ENCODE measurements at regions of chr6 and their contacts with region 1.

Region 1: GRCh38 chr6:160930547-160931377 is 60.8 kb upstream of the MAP3K4 start:
- DNase-seq: peak; percentile 61
- H3K4me3 ChIP-seq: peak overlapping the region; percentile 53 to 66 (median 54)
- H3K27ac ChIP-seq: no peak overlapping the region
- H3K4me1 ChIP-seq: peaks cover 4% of the 10 kb centered on the region
- H3K27me3 ChIP-seq: no peaks in the 10 kb centered on the region
- CTCF ChIP-seq: peak; percentile 76 to 92

Region 2: DNA sequence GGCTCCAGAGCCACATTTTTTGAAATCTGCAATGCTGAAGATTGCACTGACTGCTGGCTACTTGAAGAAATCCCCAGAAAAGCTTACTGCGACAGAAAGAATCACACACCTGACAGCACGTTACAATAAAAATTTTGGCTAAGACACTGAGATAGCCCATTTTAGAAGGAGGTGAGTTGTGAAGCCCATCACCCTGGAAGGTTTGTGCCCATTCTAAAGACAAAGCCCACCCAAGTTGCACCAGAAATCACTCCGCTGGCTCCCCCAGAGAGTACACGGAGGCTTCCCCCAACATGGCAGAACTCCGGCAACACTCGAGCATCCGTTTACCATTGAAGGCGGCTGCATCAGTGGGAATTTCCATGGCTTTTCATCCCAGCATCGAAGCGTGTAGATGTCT is 296.1 kb before region 1 on chr6:
- CTCF ChIA-PET with region 1: no interaction called
- dilution Hi-C with region 1: no loop called
- in situ Hi-C with region 1: no loop called
- intact Hi-C with region 1: no loop called
- DNase-seq: peak; percentile 0
- H3K4me3 ChIP-seq: no peak overlapping the region
- H3K27ac ChIP-seq: no peak overlapping the region
- H3K4me1 ChIP-seq: no peaks in the 10 kb centered on the region
- H3K27me3 ChIP-seq: no peaks in the 10 kb centered on the region
- CTCF ChIP-seq: no peak

Region 3: GRCh38 chr6:160733050-160733646 is 197.6 kb before region 1 on chr6:
- CTCF ChIA-PET with region 1: no interaction called
- dilution Hi-C with region 1: no loop called
- in situ Hi-C with region 1: no loop called
- intact Hi-C with region 1: loop called (anchors 1 kb)
- DNase-seq: peak; percentile 35
- H3K4me3 ChIP-seq: no peak overlapping the region
- H3K27ac ChIP-seq: no peak overlapping the region
- H3K4me1 ChIP-seq: no peaks in the 10 kb centered on the region
- H3K27me3 ChIP-seq: no peaks in the 10 kb centered on the region
- CTCF ChIP-seq: peak; percentile 83 to 90

Region 4: DNA sequence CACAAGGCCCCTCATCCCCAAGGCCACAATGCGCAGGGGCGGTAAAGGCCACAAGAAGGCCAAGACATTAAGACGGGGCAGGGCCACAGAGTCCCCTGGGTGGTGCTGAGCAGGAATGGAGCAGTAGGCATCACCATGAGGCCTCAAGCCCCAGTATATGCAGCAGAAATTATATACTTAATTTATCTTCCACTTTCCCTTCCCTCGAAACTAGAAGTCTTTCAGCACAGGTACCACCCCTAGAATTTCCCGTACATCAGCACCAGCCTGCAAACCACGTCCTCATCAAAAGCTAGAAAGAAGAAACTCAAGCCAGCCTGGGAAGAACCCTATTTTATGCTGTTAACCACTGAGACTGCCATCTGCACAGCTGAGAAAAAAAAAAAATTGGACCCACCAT is 139.3 kb before region 1 on chr6:
- CTCF ChIA-PET with region 1: no interaction called
- dilution Hi-C with region 1: no loop called
- in situ Hi-C with region 1: no loop called
- intact Hi-C with region 1: no loop called
- DNase-seq: peak; percentile 45
- H3K4me3 ChIP-seq: no peak overlapping the region
- H3K27ac ChIP-seq: peak overlapping the region; percentile 34
- H3K4me1 ChIP-seq: peaks cover 25% of the 10 kb centered on the region
- H3K27me3 ChIP-seq: no peaks in the 10 kb centered on the region
- CTCF ChIP-seq: no peak

Region 5: DNA sequence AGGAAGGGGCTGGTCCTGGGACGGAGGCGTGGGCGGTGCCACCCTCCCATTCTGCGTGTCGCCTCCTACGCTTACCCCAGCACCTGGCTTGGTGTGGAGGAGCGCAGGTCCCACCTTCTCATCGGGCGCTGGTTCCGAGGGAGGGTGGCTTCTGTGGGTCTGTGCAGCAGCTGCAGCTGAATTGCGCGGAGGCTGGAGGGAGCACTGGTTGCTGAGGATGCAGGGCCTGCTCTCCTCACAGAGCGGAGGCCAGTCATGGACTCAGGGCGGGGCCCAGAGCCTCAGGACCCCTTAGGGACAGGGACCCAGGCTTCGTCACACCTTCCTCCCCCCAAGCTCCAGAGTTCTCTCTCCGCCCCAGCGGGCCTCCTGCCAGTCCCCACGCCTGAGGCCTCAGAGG is 67.0 kb before region 1 on chr6:
- CTCF ChIA-PET with region 1: no interaction called
- dilution Hi-C with region 1: no loop called
- in situ Hi-C with region 1: no loop called
- intact Hi-C with region 1: no loop called
- DNase-seq: no peak
- H3K4me3 ChIP-seq: no peak overlapping the region
- H3K27ac ChIP-seq: no peak overlapping the region
- H3K4me1 ChIP-seq: no peaks in the 10 kb centered on the region
- H3K27me3 ChIP-seq: no peaks in the 10 kb centered on the region
- CTCF ChIP-seq: no peak

Region 6: GRCh38 chr6:160992061-160992979 is 61.6 kb after region 1 on chr6:
- CTCF ChIA-PET with region 1: no interaction called
- dilution Hi-C with region 1: no loop called
- in situ Hi-C with region 1: loop called in 1 of 2 experiments (anchors 10 kb)
- intact Hi-C with region 1: loop called (anchors 1 kb)
- DNase-seq: peak; percentile 65
- H3K4me3 ChIP-seq: peak overlapping the region; percentile 89 to 93 (median 93)
- H3K27ac ChIP-seq: peak overlapping the region; percentile 78
- H3K4me1 ChIP-seq: peaks cover 20% of the 10 kb centered on the region
- H3K27me3 ChIP-seq: no peaks in the 10 kb centered on the region
- CTCF ChIP-seq: peak; percentile 63 to 80

Region 7: DNA sequence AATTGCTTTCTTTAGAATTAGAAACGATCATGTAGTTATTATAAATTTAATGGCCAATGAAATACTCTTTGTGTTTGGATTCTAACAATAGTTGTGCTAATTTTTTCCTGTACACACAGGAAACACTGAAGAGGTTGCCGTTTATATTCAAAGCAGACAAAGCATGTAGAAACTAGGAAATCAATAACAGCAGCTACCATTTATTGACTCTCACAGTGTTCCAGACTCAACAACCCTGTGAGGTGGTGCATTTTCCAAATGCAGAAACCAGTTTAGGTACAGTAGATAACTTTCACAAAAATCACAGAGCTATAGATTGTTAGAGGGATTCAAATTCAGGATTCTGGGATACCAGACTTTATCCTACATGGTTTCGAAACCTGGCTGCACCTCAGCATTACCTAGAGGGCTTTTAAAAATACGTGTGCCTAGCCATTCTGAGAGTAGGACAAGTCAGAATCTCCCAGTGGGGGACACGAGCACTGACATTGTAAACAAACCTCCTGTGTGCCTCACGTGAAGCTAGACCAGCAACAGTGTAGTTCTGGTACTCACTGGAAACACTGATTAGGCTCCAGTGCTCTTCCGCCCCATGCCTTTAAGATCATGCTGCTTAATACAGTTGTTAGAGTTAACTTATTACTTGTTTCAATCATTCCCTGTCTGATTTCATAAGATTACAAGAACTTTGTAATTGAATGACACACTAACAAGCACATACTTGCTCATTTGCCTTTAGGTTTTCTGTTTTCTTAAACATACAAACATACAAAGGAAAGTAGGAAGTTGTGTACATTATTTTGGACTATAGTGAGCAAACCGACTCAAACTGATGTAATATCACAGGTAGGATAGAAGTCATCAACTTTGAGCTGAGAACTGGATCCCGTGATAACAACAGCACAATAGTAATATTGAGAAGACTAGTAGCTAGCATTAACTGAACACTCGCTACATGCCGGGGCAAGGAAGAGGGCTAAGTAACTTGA is 126.6 kb after region 1 on chr6:
- CTCF ChIA-PET with region 1: interaction called, 11 read pairs
- dilution Hi-C with region 1: no loop called
- in situ Hi-C with region 1: no loop called
- intact Hi-C with region 1: no loop called
- DNase-seq: peak; percentile 61
- H3K4me3 ChIP-seq: no peak overlapping the region
- H3K27ac ChIP-seq: peak overlapping the region; percentile 6
- H3K4me1 ChIP-seq: peaks cover 12% of the 10 kb centered on the region
- H3K27me3 ChIP-seq: no peaks in the 10 kb centered on the region
- CTCF ChIP-seq: no peak

Region 8: DNA sequence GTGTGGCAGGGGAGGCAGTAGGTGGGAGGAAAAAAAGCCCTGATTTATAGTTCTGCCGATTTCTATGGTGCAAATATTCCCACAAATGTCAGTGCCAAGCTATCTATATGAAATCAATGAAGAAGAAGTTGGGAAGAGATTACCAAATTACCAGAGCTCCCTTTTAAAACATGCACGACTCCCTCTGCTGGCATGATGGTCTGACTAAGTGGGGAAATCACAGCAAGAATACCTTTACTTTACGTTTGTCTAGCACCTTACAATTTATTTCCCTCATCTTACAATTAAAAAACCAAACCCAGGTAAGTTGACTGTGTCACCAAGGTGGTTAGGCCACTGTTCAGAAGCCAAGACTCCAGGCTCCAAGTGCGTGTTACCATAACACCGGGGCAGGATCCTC is 287.5 kb after region 1 on chr6:
- CTCF ChIA-PET with region 1: interaction called, 3 read pairs
- dilution Hi-C with region 1: no loop called
- in situ Hi-C with region 1: no loop called
- intact Hi-C with region 1: loop called (anchors 1 kb)
- DNase-seq: no peak
- H3K4me3 ChIP-seq: no peak overlapping the region
- H3K27ac ChIP-seq: no peak overlapping the region
- H3K4me1 ChIP-seq: no peaks in the 10 kb centered on the region
- H3K27me3 ChIP-seq: no peaks in the 10 kb centered on the region
- CTCF ChIP-seq: peak; percentile 8 to 22

Measured in mammary epithelial cell (primary cell).